Calu3 (cell line): ENCODE measurements at regions of chr7 and their contacts with region 1.

Region 1: DNA sequence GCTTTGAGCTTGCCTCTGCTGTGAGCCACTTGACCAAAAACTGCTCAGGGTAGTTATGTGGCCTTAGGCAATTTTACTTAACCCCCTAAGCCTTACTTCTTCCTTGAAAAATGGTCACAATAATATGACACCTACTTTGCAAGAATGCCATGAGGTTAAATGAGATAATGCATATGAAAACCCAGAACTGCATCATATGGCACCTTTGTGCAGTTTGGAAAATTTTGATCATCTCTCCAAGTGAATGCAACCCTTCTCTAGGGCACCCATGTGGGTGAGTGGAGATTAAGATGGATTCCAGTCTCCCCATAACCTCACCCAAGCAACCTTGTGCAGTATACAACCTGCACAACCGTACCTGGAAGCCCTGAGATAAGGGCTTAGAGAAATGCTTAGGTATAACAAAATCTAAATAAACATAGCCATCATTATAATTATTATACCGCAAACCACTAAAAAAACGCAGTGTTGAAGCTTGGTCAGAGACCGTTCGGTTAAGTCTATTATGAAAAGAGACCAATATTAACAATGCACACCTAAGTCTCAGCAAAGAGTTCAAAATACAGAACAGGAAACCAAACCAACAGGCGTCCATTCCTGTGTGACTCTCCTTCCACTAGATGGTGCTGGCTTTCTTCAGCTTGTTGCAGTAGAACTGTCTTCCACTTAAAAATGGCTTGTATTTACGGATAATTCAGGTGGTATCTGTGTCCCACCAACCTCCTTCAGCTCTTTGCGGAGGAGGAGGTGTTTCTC is 21.0 kb upstream of the ASB15 start:
- DNase-seq: peak; percentile 40
- H3K4me3 Mint-ChIP-seq: no peak overlapping the region
- H3K27ac Mint-ChIP-seq: no peak overlapping the region
- H3K4me1 Mint-ChIP-seq: peaks cover 8% of the 10 kb centered on the region
- H3K27me3 Mint-ChIP-seq: no peaks in the 10 kb centered on the region
- CTCF ChIP-seq: peak; percentile 68

Region 2: DNA sequence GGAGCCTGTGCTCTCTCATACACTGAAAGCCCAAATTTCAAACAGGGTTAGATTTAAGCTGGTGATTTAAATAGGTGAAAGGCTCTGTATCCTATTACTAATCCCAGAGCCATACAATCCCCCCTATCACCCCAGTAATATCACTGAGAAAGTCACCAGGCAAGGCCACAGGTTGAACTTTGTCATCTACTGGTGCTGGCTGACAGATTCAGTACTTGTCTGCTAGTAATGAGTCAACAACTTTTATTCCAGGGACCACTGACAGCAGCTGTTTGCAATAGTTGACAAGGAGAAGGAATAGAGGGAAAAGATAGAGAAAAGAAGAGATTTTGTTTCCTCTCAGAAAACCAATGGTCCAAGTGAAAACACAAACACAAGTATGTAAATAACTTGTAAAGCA is 31.4 kb after region 1 on chr7:
- CTCF ChIA-PET with region 1: interaction called, 10 read pairs
- intact Hi-C with region 1: no loop called
- DNase-seq: no peak
- H3K4me3 Mint-ChIP-seq: no peak overlapping the region
- H3K27ac Mint-ChIP-seq: no peak overlapping the region
- H3K4me1 Mint-ChIP-seq: no peaks in the 10 kb centered on the region
- H3K27me3 Mint-ChIP-seq: no peaks in the 10 kb centered on the region
- CTCF ChIP-seq: no peak

Region 3: DNA sequence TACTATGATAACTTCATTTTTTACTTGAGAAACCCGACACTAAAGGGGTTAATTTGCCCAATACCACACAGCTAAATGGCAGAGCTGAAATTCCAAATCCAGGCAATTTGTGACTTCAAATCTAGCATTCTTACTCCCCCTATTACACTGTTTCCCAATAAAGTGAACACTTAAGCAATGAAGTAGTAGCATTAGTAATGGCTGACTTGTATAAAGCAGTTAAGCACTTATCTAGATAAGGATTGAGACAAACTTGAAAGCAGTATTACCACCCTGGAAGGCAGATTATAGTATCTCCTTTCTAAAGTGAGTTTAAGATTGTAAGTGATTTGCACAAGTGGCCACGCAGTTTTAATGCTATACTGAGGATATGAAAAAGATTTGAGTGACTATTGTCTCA is 128.9 kb after region 1 on chr7:
- CTCF ChIA-PET with region 1: no interaction called
- intact Hi-C with region 1: loop called (anchors 5 kb)
- DNase-seq: no peak
- H3K4me3 Mint-ChIP-seq: no peak overlapping the region
- H3K27ac Mint-ChIP-seq: no peak overlapping the region
- H3K4me1 Mint-ChIP-seq: peaks cover 21% of the 10 kb centered on the region
- H3K27me3 Mint-ChIP-seq: no peaks in the 10 kb centered on the region
- CTCF ChIP-seq: no peak